Aorta (tissue), 5 donors: ENCODE measurements at regions of chr11 and their contacts with region 1.

Region 1: GRCh38 chr11:112219476-112220232 is 6.6 kb upstream of the PTS start:
- DNase-seq: no peak
- ATAC-seq: peak; percentile 93
- H3K4me3 ChIP-seq: no peak overlapping the region
- H3K27ac ChIP-seq: no peak overlapping the region
- H3K4me1 ChIP-seq: peaks cover 0 to 2% of the 10 kb centered on the region in 2 donors
- H3K27me3 ChIP-seq: no peaks in the 10 kb centered on the region

Region 2: GRCh38 chr11:112523477-112523876 is 303.8 kb after region 1 on chr11:
- intact Hi-C with region 1: loop called in 1 of 2 experiments (anchors 10 kb)
- DNase-seq: peak; percentile 68 to 79
- ATAC-seq: peak; percentile 58
- H3K4me3 ChIP-seq: no peak overlapping the region
- H3K27ac ChIP-seq: peak overlapping the region in 1 of 2 donors; percentile 31
- H3K4me1 ChIP-seq: no peaks in the 10 kb centered on the region
- H3K27me3 ChIP-seq: no peaks in the 10 kb centered on the region

Region 3: GRCh38 chr11:112555491-112556364 is 336.1 kb after region 1 on chr11:
- intact Hi-C with region 1: loop called (anchors 10 kb)
- DNase-seq: peak; percentile 68 to 86
- ATAC-seq: peak; percentile 81
- H3K4me3 ChIP-seq: no peak overlapping the region
- H3K27ac ChIP-seq: no peak overlapping the region
- H3K4me1 ChIP-seq: no peaks in the 10 kb centered on the region
- H3K27me3 ChIP-seq: no peaks in the 10 kb centered on the region

Region 4: DNA sequence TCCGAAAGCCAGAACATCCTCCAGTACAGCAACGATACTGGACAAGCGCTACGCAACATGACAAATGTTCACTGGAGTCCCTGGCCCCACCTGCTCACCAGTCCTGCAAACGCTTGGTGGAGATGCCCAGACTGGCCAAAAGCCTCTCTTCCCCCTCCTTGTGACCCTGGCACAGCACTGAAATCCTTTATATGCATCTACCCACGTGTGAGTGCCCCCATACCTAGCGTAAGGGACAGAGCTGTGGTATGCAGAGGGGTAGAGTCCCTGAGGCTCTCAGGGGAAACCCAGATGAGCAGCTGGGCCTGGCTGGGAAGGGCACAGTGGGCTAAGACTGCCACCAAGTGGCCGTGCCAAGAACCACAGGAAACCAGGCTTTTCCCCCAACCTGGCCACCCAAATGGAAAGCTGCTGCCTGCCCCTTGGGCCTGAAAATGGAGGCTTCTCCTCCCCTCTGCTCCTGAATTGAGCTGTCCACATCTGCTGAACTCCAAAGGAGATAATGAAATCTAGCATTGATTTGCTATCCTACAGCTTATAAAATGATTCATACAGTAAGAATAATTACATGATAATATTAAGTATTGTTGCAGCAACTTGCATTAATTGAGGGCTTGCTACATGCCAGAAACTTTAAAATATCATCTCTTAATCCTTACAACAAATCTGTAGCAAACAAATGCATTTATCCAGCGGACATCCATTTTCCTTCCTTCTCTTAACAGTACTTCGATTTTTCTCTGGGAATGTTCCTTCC is 1070.0 kb after region 1 on chr11:
- intact Hi-C with region 1: loop called in 1 of 2 experiments (anchors 10 kb)
- DNase-seq: peak; percentile 71 to 85
- ATAC-seq: peak; percentile 72
- H3K4me3 ChIP-seq: no peak overlapping the region
- H3K27ac ChIP-seq: no peak overlapping the region
- H3K4me1 ChIP-seq: no peaks in the 10 kb centered on the region
- H3K27me3 ChIP-seq: no peaks in the 10 kb centered on the region